Naive thymus-derived CD4-positive, alpha-beta T cell (primary cell): ENCODE measurements at regions of chr15 and their contacts with region 1.

Region 1: DNA sequence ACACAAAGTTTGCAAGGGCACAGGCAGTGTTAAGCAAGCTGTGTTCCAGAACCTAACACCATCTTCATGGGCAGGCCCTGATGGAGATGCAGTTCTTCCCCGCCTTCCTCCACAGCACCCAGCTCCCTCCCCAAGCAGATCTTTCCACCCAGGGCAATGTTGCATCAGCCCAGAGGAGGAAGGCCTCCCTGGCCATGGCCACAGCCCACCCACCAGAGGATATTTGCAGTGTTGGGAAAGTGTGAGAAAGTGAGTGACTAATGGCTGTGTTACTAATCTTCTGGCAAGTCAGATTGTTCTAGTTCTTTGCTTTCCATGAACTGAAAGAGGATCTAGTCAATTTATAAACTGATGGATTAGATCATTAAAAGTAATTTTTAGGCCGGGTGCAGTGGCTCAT is 42.0 kb upstream of the ATP10A start:
- DNase-seq: no peak
- ATAC-seq: peak; percentile 31
- H3K4me3 ChIP-seq: no peak overlapping the region
- H3K4me3 Mint-ChIP-seq: no peak overlapping the region
- H3K27ac ChIP-seq: no peak overlapping the region
- H3K27ac Mint-ChIP-seq: no peak overlapping the region
- H3K4me1 ChIP-seq: peaks cover 0 to 3% of the 10 kb centered on the region in 2 donors
- H3K4me1 Mint-ChIP-seq: peaks cover 5 to 15% (median 13%) of the 10 kb centered on the region in 7 donors
- H3K27me3 ChIP-seq: no peaks in the 10 kb centered on the region
- H3K27me3 Mint-ChIP-seq: no peaks in the 10 kb centered on the region

Region 2: GRCh38 chr15:25869701-25870100 is 35.4 kb before region 1 on chr15:
- CTCF ChIA-PET with region 1: no interaction called
- POLR2A ChIA-PET with region 1: interaction called, 6 read pairs
- intact Hi-C with region 1: loop called in 1 of 2 experiments (anchors 5 kb)
- DNase-seq: no peak
- ATAC-seq: no peak
- H3K4me3 ChIP-seq: no peak overlapping the region
- H3K4me3 Mint-ChIP-seq: peak overlapping the region in 3 of 10 donors; percentile 6 to 43 (median 26)
- H3K27ac ChIP-seq: no peak overlapping the region
- H3K27ac Mint-ChIP-seq: peak overlapping the region in 2 of 9 donors; percentile 11 to 44
- H3K4me1 ChIP-seq: no peaks in the 10 kb centered on the region
- H3K4me1 Mint-ChIP-seq: peaks cover 0 to 15% (median 9%) of the 10 kb centered on the region in 7 donors
- H3K27me3 ChIP-seq: no peaks in the 10 kb centered on the region
- H3K27me3 Mint-ChIP-seq: peaks cover 0 to 12% (median 0%) of the 10 kb centered on the region in 5 donors

Region 3: DNA sequence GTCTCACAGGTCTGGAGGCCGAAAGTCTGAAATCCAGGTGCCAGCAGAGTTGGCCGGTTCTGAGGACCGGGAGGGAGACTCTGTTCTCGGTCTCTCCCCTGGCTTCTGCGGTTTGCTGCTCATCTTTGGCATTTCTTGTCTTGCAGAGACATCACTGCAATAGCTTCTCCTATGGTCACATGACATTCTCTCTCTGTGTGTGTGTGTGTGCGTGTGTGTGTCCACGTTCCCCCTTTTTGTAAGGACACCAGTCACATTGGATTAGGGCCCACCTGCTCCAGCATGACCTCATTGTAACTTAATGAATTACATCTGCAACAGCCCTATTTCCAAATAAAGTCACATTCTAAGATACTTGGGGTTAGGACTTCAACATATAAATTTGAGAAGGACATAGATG is 29.6 kb before region 1 on chr15:
- CTCF ChIA-PET with region 1: no interaction called
- POLR2A ChIA-PET with region 1: no interaction called
- intact Hi-C with region 1: loop called (anchors 5 kb)
- DNase-seq: no peak
- ATAC-seq: no peak
- H3K4me3 ChIP-seq: no peak overlapping the region
- H3K4me3 Mint-ChIP-seq: no peak overlapping the region
- H3K27ac ChIP-seq: no peak overlapping the region
- H3K27ac Mint-ChIP-seq: peak overlapping the region in 1 of 9 donors; percentile 18
- H3K4me1 ChIP-seq: no peaks in the 10 kb centered on the region
- H3K4me1 Mint-ChIP-seq: no peaks in the 10 kb centered on the region
- H3K27me3 ChIP-seq: no peaks in the 10 kb centered on the region
- H3K27me3 Mint-ChIP-seq: no peaks in the 10 kb centered on the region

Region 4: DNA sequence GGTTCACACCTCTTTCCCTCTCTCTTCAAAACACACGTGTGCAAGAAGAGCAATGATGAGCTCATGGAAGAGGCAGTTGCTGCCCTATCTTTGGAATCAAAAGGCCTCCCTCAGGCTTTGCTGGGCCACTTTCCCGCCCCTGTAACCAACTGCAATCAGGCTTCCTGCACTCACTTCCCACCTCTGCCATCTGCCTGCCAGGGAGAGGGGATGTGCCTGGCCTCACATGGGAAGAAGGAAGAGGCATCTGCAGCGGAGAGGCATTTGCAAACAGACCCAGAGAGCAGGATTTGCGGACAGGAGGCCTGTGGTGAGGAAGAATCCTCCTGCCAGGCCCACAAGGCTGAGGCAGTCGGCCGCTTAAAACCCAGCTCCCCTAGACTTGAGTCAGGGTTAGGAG is 133.6 kb after region 1 on chr15:
- CTCF ChIA-PET with region 1: no interaction called
- POLR2A ChIA-PET with region 1: no interaction called
- intact Hi-C with region 1: no loop called
- DNase-seq: no peak
- ATAC-seq: no peak
- H3K4me3 ChIP-seq: no peak overlapping the region
- H3K4me3 Mint-ChIP-seq: no peak overlapping the region
- H3K27ac ChIP-seq: no peak overlapping the region
- H3K27ac Mint-ChIP-seq: no peak overlapping the region
- H3K4me1 ChIP-seq: no peaks in the 10 kb centered on the region
- H3K4me1 Mint-ChIP-seq: peaks cover 0 to 4% (median 0%) of the 10 kb centered on the region in 7 donors
- H3K27me3 ChIP-seq: no peaks in the 10 kb centered on the region
- H3K27me3 Mint-ChIP-seq: peaks cover 20 to 57% (median 37%) of the 10 kb centered on the region in 5 donors

Region 5: GRCh38 chr15:26806144-26806543 is 901.0 kb after region 1 on chr15:
- CTCF ChIA-PET with region 1: no interaction called
- POLR2A ChIA-PET with region 1: no interaction called
- intact Hi-C with region 1: no loop called
- DNase-seq: no peak
- ATAC-seq: no peak
- H3K4me3 ChIP-seq: no peak overlapping the region
- H3K4me3 Mint-ChIP-seq: no peak overlapping the region
- H3K27ac ChIP-seq: no peak overlapping the region
- H3K27ac Mint-ChIP-seq: no peak overlapping the region
- H3K4me1 ChIP-seq: no peaks in the 10 kb centered on the region
- H3K4me1 Mint-ChIP-seq: no peaks in the 10 kb centered on the region
- H3K27me3 ChIP-seq: no peaks in the 10 kb centered on the region
- H3K27me3 Mint-ChIP-seq: peaks cover 0 to 9% (median 0%) of the 10 kb centered on the region in 5 donors